ENCODE measurements at regions of chr15 and their contacts with region 1.

Region 1: GRCh38 chr15:58627046-58627445 is 122.5 kb downstream of the ADAM10 start:
- DNase-seq: no peak
- H3K4me3 ChIP-seq: no peak overlapping the region
- H3K4me3 Mint-ChIP-seq: no peak overlapping the region
- H3K27ac Mint-ChIP-seq: no peak overlapping the region
- H3K4me1 ChIP-seq: no peaks in the 10 kb centered on the region
- H3K4me1 Mint-ChIP-seq: no peaks in the 10 kb centered on the region
- H3K27me3 ChIP-seq: no peaks in the 10 kb centered on the region
- H3K27me3 Mint-ChIP-seq: no peaks in the 10 kb centered on the region
- CTCF ChIP-seq: no peak

Region 2: GRCh38 chr15:57281321-57281720 is 1345.7 kb before region 1 on chr15:
- CTCF ChIA-PET with region 1: interaction called, 10 read pairs
- POLR2A ChIA-PET with region 1: no interaction called
- intact Hi-C with region 1: no loop called
- DNase-seq: no peak
- H3K4me3 ChIP-seq: no peak overlapping the region
- H3K4me3 Mint-ChIP-seq: no peak overlapping the region
- H3K27ac Mint-ChIP-seq: no peak overlapping the region
- H3K4me1 ChIP-seq: no peaks in the 10 kb centered on the region
- H3K4me1 Mint-ChIP-seq: no peaks in the 10 kb centered on the region
- H3K27me3 ChIP-seq: no peaks in the 10 kb centered on the region
- H3K27me3 Mint-ChIP-seq: no peaks in the 10 kb centered on the region
- CTCF ChIP-seq: no peak

Region 3: DNA sequence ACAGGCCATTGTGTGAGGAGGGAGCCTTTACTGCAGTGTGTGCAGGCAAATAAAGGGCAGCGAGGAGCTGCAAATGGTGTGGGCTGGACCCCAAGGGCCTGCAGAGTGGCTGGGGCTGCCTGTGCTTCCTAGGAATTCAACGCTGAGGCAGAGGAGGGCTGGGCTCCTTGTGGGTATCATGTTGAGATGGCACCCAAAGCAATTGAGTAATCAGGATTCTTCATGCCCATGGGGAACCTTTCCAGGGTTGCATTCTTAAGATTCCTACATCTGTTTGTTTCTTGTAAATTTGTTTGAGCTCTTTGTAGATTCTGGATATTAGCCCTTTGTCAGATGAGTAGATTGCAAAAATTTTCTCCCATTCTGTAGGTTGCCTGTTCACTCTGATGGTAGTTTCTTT is 280.7 kb before region 1 on chr15:
- CTCF ChIA-PET with region 1: no interaction called
- POLR2A ChIA-PET with region 1: no interaction called
- intact Hi-C with region 1: no loop called
- DNase-seq: peak; percentile 27 to 46
- H3K4me3 ChIP-seq: no peak overlapping the region
- H3K4me3 Mint-ChIP-seq: no peak overlapping the region
- H3K27ac Mint-ChIP-seq: no peak overlapping the region
- H3K4me1 ChIP-seq: peaks cover 28% of the 10 kb centered on the region
- H3K4me1 Mint-ChIP-seq: peaks cover 7% of the 10 kb centered on the region
- H3K27me3 ChIP-seq: no peaks in the 10 kb centered on the region
- H3K27me3 Mint-ChIP-seq: no peaks in the 10 kb centered on the region
- CTCF ChIP-seq: no peak